Right lobe of liver (tissue), 6 donors: ENCODE measurements at regions of chr21 and their contacts with region 1.

Region 1: GRCh38 chr21:17045214-17045853 is 467.5 kb upstream of the CXADR start:
- DNase-seq: no peak
- ATAC-seq: peak; percentile 78 to 80 (median 79)
- H3K4me3 ChIP-seq: no peak overlapping the region
- H3K27ac ChIP-seq: no peak overlapping the region
- H3K4me1 ChIP-seq: no peaks in the 10 kb centered on the region
- H3K27me3 ChIP-seq: no peaks in the 10 kb centered on the region
- CTCF ChIP-seq: peak; percentile 31 to 69 (median 52)
- POLR2A ChIP-seq: no peak

Region 2: GRCh38 chr21:16942703-16943102 is 102.6 kb before region 1 on chr21:
- intact Hi-C with region 1: loop called in 1 of 2 experiments (anchors 10 kb)
- DNase-seq: no peak
- ATAC-seq: peak; percentile 63 to 85 (median 72)
- H3K4me3 ChIP-seq: no peak overlapping the region
- H3K27ac ChIP-seq: no peak overlapping the region
- H3K4me1 ChIP-seq: no peaks in the 10 kb centered on the region
- H3K27me3 ChIP-seq: no peaks in the 10 kb centered on the region
- CTCF ChIP-seq: peak; percentile 50 to 59 (median 52)
- POLR2A ChIP-seq: no peak

Region 3: DNA sequence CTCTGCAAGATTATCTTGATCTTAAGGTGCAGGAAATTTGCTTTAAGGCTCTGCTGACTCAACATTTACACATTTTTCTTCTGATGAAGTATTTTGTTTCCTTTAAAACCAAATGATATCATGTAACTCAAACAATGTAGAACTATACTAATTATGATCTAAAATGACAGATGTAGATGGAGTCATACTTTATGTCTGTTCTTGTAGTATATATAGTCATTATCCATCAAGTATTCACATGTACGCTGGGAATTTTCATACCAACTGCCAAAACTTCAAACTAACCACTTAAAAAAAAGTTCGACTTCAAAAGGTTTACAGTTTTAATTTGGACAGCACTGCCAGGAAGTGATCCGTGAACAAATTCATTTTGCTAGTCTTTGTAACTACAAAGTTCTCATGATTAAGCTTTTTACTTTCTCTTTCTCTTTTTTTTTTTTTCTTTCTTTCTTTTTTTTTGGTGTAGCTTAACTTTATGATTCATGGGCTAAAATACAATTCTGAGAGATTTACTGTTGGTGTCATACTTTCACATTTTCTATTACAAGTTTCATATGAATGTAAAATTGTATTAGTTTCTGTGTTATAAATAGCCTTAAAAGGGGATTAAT is 41.5 kb before region 1 on chr21:
- intact Hi-C with region 1: no loop called
- DNase-seq: no peak
- ATAC-seq: no peak
- H3K4me3 ChIP-seq: no peak overlapping the region
- H3K27ac ChIP-seq: no peak overlapping the region
- H3K4me1 ChIP-seq: no peaks in the 10 kb centered on the region
- H3K27me3 ChIP-seq: no peaks in the 10 kb centered on the region
- CTCF ChIP-seq: no peak
- POLR2A ChIP-seq: no peak

Region 4: GRCh38 chr21:17146431-17146830 is 101.1 kb after region 1 on chr21:
- intact Hi-C with region 1: no loop called
- DNase-seq: no peak
- ATAC-seq: no peak
- H3K4me3 ChIP-seq: no peak overlapping the region
- H3K27ac ChIP-seq: no peak overlapping the region
- H3K4me1 ChIP-seq: no peaks in the 10 kb centered on the region
- H3K27me3 ChIP-seq: no peaks in the 10 kb centered on the region
- CTCF ChIP-seq: no peak
- POLR2A ChIP-seq: no peak